MCF 10A (cell line): ENCODE measurements at regions of chr3 and their contacts with region 1.

Region 1: DNA sequence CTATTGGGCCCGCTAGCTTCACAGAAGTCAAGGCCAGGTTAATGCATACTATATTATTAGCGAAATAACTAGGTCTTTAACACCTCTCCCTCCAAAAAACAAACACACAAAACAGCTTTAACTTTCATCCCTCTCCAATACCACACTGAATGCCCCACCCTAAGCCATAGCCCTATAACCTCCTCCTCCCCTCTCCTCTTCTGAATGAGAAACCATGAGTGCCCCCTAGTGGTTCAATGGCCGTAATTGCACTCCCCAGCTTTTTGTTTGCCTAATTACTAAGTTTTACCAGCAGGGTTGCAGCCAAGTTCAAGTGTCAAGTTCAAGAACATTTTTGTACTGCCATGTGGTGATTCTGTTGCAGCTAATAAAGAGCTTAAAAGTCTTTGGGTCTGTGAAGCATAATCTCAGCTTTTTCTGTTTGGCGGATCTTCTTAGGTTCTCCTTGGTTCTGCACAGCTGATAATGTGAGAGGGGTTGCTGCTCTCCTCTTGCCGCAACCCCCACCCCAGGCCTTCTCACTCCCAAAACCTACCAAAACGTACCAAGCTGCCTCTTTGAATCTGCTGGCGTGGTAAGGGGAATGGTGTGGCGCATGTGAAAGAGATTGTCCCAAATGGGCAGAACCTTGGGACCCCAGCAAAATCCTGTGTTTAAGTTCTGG is 57.9 kb downstream of the RPL22L1 start:
- DNase-seq: peak; percentile 90
- H3K4me3 Mint-ChIP-seq: peak overlapping the region; percentile 55
- H3K27ac Mint-ChIP-seq: peak overlapping the region; percentile 82
- H3K4me1 Mint-ChIP-seq: peaks cover 37% of the 10 kb centered on the region
- H3K27me3 Mint-ChIP-seq: no peaks in the 10 kb centered on the region
- CTCF ChIP-seq: peak; percentile 89

Region 2: GRCh38 chr3:170414202-170414663 is 397.8 kb before region 1 on chr3:
- CTCF ChIA-PET with region 1: interaction called, 435 read pairs
- POLR2A ChIA-PET with region 1: interaction called, 63 read pairs
- intact Hi-C with region 1: loop called (anchors 1 kb)
- DNase-seq: peak; percentile 78
- H3K4me3 Mint-ChIP-seq: no peak overlapping the region
- H3K27ac Mint-ChIP-seq: peak overlapping the region; percentile 39
- H3K4me1 Mint-ChIP-seq: peaks cover 9% of the 10 kb centered on the region
- H3K27me3 Mint-ChIP-seq: no peaks in the 10 kb centered on the region
- CTCF ChIP-seq: peak; percentile 95

Region 3: DNA sequence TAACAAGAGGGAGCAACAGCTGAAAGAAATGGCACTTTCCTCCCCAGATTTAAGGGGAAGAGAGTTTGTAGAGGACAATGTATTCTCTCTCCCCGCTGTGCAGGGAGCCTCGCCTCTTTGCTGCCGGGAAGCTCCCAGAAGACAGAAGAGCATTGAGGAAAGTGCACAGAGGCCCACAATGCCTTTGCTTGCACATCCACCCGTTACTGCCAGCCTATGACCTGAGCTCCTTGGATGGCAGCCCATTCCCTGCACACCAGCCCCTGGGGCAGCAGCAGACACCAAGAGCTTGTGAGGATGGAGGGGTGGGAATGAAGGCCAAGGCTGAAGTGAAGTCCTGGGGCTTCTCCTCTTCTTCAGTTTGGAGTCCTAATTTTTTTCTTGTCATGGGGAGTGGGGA is 326.4 kb before region 1 on chr3:
- CTCF ChIA-PET with region 1: interaction called, 13 read pairs
- POLR2A ChIA-PET with region 1: interaction called, 3 read pairs
- intact Hi-C with region 1: no loop called
- DNase-seq: peak; percentile 20
- H3K4me3 Mint-ChIP-seq: no peak overlapping the region
- H3K27ac Mint-ChIP-seq: no peak overlapping the region
- H3K4me1 Mint-ChIP-seq: no peaks in the 10 kb centered on the region
- H3K27me3 Mint-ChIP-seq: no peaks in the 10 kb centered on the region
- CTCF ChIP-seq: no peak

Region 4: DNA sequence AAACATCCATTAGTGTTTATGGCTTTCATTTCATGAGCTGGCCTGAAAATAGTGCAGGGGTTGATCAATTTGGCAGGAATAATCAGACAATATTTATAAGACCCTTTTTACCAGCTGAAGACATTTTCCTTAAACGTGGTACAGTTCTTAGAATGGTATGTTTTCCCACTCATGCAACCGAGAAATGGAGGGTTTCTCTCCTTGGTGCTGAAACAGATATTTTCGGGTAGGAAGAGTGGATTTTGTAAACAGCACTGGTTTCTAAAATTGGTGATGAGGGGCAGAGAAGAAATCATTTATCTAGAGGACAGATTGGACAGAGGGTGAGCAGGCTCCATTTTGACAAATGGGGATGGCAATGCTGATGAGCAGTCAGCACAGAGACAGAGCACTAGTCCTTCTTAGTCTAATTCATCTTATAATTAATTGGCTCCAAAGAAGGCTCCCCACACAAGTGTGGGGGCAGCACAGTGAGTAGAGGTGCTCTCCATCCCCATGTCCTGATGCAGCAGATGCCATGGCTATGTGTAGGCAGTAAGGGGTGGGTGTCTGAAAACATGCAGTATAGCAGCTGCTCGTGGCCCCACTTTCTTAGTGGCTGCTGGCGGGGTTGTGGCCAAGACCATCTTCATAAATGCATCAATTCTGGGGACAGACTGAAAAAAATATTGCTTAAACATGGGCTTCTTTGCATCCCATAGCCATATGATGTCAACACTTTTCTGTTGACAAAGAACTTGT is 208.1 kb before region 1 on chr3:
- CTCF ChIA-PET with region 1: interaction called, 24 read pairs
- POLR2A ChIA-PET with region 1: no interaction called
- intact Hi-C with region 1: loop called (anchors 1 kb)
- DNase-seq: no peak
- H3K4me3 Mint-ChIP-seq: no peak overlapping the region
- H3K27ac Mint-ChIP-seq: no peak overlapping the region
- H3K4me1 Mint-ChIP-seq: no peaks in the 10 kb centered on the region
- H3K27me3 Mint-ChIP-seq: no peaks in the 10 kb centered on the region
- CTCF ChIP-seq: no peak

Region 5: GRCh38 chr3:170751083-170751898 is 60.8 kb before region 1 on chr3:
- CTCF ChIA-PET with region 1: interaction called, 9 read pairs
- POLR2A ChIA-PET with region 1: interaction called, 22 read pairs
- intact Hi-C with region 1: loop called (anchors 2 kb)
- DNase-seq: peak; percentile 93
- H3K4me3 Mint-ChIP-seq: peak overlapping the region; percentile 16
- H3K27ac Mint-ChIP-seq: peak overlapping the region; percentile 59
- H3K4me1 Mint-ChIP-seq: peaks cover 66% of the 10 kb centered on the region
- H3K27me3 Mint-ChIP-seq: no peaks in the 10 kb centered on the region
- CTCF ChIP-seq: no peak

Region 6: DNA sequence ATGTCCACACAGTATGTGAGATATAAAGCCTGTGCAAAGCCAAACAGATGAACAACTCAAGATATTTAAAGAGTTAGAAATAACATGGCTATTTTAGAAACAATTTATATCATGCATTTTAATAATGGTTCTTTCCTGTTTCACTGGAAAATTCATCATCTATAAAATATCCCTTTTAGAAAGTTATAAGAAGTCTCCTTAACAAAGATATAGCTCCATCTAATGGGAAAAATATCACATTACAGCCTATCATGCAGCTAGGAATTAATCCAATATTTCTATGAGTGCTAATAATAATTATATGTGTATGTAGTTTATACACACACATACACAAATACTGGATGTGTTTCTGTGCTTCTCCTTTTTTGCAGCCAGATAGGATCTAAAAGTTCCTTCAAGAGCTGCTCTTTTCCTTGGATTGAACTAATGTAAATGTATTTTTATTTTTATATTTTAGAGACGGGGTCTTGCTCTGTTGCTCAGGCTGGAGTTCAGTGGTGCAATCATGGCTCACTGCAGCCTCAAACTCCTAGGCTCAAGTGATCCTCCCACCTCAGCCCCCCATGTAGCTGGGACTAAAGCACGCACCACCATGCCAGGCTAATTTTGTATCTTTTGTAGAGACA is 36.3 kb after region 1 on chr3:
- CTCF ChIA-PET with region 1: interaction called, 74 read pairs
- POLR2A ChIA-PET with region 1: no interaction called
- intact Hi-C with region 1: loop called (anchors 1 kb)
- DNase-seq: peak; percentile 20
- H3K4me3 Mint-ChIP-seq: no peak overlapping the region
- H3K27ac Mint-ChIP-seq: no peak overlapping the region
- H3K4me1 Mint-ChIP-seq: no peaks in the 10 kb centered on the region
- H3K27me3 Mint-ChIP-seq: peaks cover 16% of the 10 kb centered on the region
- CTCF ChIP-seq: peak; percentile 56